ENCODE measurements at regions of chr2 and their contacts with region 1.

Region 1: DNA sequence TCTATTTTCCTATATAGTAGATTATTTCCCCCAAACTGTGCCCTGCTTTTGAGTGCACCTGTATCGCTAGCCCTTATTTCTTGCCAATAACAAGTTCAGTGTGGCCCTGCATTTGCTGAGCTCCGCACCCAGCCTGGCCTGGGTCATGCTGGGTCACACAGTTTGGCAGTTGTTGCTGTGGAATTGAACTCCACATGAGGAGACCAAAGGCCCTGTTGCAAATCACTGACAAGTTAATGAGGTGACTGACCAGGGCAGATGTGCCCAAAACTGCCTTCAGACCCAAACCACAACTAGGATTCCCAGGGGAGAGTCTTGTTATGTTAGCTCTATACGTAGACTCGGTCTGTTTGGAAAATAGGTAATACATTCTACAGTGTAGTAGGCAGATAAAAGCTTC is 31.0 kb downstream of the COL4A4 start:
- DNase-seq: no peak
- ATAC-seq: no peak
- H3K4me3 ChIP-seq: no peak overlapping the region
- H3K27ac ChIP-seq: no peak overlapping the region
- H3K4me1 ChIP-seq: no peaks in the 10 kb centered on the region
- H3K27me3 ChIP-seq: no peaks in the 10 kb centered on the region; the same call in 1 of the 2 replicates
- CTCF ChIP-seq: no peak

Region 2: GRCh38 chr2:226977775-226978190 is 155.2 kb before region 1 on chr2:
- CTCF ChIA-PET with region 1: no interaction called
- POLR2A ChIA-PET with region 1: no interaction called
- in situ Hi-C with region 1: no loop called
- intact Hi-C with region 1: no loop called
- DNase-seq: no peak
- ATAC-seq: no peak
- H3K4me3 ChIP-seq: no peak overlapping the region
- H3K27ac ChIP-seq: no peak overlapping the region
- H3K4me1 ChIP-seq: no peaks in the 10 kb centered on the region
- H3K27me3 ChIP-seq: no peaks in the 10 kb centered on the region
- CTCF ChIP-seq: no peak

Region 3: GRCh38 chr2:227238238-227239237 is 105.6 kb after region 1 on chr2:
- CTCF ChIA-PET with region 1: interaction called, 8 read pairs
- POLR2A ChIA-PET with region 1: no interaction called
- in situ Hi-C with region 1: no loop called
- intact Hi-C with region 1: loop called (anchors 1 kb)
- DNase-seq: peak; percentile 54
- ATAC-seq: peak; percentile 68; the same call in 1 of the 2 replicates
- H3K4me3 ChIP-seq: no peak overlapping the region
- H3K27ac ChIP-seq: no peak overlapping the region
- H3K4me1 ChIP-seq: no peaks in the 10 kb centered on the region
- H3K27me3 ChIP-seq: peaks cover 2% of the 10 kb centered on the region; the same call in 1 of the 2 replicates
- CTCF ChIP-seq: peak; percentile 93

Region 4: DNA sequence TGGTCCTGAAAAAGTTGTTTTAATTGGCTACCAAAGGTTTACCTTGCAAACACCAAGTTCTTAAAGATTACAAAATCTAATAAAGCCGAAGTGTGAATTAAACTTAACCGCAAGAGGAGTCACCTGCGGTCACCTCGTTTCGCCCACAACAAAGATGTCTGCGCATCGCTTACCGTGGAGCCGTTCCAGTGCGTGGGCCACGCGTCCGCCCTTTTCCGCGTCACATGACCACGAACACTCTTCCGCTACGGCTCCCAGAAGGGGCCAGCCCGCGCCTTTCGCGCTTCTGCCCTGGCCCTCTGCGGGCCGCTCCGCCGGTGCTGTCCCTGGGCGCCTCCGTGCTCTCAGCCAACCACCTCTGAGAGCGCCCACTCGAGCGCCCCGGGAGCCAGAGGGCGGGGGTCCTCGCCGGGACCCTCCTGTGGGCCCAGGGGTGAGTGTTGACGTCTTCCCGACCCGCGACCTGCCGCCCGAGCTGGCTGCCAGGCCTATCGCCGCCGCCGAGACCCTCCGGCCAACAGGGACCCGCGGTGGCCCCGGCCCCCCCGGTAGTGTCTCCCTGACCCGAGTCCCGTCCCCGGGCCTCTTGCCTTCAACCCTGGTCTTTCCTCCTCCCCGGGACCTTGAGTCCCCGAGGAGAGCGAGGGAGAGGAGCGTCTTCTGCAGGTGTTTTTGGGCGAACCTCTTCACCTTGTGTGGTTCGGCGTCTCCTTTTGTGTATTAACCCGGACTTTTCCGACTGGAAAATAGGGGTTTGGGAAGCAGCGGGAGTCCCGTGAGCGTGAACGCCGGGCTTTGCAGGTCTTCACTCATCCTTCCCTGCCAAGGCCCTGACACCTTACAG is 192.2 kb after region 1 on chr2 and contains the start of gene MFF:
- CTCF ChIA-PET with region 1: no interaction called
- POLR2A ChIA-PET with region 1: no interaction called
- in situ Hi-C with region 1: no loop called
- intact Hi-C with region 1: loop called (anchors 5 kb)
- DNase-seq: peak; percentile 61
- ATAC-seq: peak; percentile 98
- H3K4me3 ChIP-seq: peak within 1 kb of the TSS; percentile 77 to 97
- H3K27ac ChIP-seq: peak within 1 kb of the TSS; percentile 98
- H3K4me1 ChIP-seq: peaks cover 21% of the 10 kb centered on the region
- H3K27me3 ChIP-seq: no peaks in the 10 kb centered on the region
- CTCF ChIP-seq: peak; percentile 66
- total RNA-seq, gene MFF: 60.6 TPM

Region 5: GRCh38 chr2:227388537-227389011 is 255.6 kb after region 1 on chr2:
- CTCF ChIA-PET with region 1: no interaction called
- POLR2A ChIA-PET with region 1: no interaction called
- in situ Hi-C with region 1: no loop called
- intact Hi-C with region 1: loop called (anchors 10 kb)
- DNase-seq: peak; percentile 95
- ATAC-seq: no peak
- H3K4me3 ChIP-seq: no peak overlapping the region
- H3K27ac ChIP-seq: no peak overlapping the region
- H3K4me1 ChIP-seq: peaks cover 3% of the 10 kb centered on the region; the same call in 1 of the 2 replicates
- H3K27me3 ChIP-seq: peaks cover 2% of the 10 kb centered on the region; the same call in 1 of the 2 replicates
- CTCF ChIP-seq: no peak

Region 6: DNA sequence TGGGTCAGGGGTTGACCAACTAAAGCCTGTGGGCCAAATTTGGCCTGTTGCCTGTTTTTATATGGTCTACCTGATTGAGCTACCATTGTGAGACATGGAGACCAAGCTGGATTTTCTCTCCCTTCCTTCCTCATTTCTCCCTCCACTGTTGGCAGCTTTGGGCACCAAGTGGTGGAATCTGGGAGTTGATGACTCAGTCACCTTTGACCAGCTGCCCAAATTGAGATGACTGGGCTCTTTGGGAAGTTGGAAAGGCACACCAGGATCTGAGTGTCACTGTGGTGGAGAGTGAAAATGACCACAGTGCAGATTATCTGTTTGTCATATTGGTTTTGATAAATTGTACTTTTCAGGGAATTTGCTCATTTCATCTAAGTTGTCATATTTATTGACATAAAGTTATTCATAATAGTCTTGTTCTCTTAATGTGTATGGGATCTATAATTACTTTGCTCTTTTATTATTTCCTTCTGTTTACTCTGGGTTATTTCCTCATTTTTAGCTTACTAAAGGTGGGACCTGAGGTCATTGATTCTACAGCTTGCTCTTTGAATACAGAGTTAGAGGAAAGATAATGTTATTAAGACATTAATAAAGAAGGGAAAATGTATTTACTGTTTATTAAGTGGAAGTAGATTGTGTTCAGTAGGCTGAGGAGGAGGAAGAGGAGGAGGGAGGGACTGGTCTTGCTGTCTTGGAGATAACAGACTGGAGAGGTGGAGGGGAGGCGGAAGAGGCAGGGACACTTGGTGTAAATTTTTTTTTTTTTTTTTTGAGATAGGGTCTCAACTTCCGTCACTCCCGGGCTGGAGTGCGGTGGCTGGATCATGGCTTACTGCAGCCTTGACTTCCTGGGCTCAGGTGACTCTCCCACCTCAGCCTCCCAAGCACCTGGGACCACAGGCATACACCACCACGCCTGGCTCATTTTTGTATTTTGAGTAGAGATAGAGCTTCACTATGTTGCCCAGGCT is 370.7 kb after region 1 on chr2:
- CTCF ChIA-PET with region 1: no interaction called
- POLR2A ChIA-PET with region 1: no interaction called
- in situ Hi-C with region 1: no loop called
- intact Hi-C with region 1: no loop called
- DNase-seq: peak; percentile 39
- ATAC-seq: peak; percentile 90
- H3K4me3 ChIP-seq: no peak overlapping the region
- H3K27ac ChIP-seq: 0 out of 2 replicates have a peak overlapping the region, but pooled peaks have one; percentile 18
- H3K4me1 ChIP-seq: peaks cover 16% of the 10 kb centered on the region
- H3K27me3 ChIP-seq: no peaks in the 10 kb centered on the region
- CTCF ChIP-seq: no peak

Region 7: GRCh38 chr2:227766373-227766883 is 633.4 kb after region 1 on chr2:
- CTCF ChIA-PET with region 1: no interaction called
- POLR2A ChIA-PET with region 1: no interaction called
- in situ Hi-C with region 1: no loop called
- intact Hi-C with region 1: loop called (anchors 5 kb)
- DNase-seq: peak; percentile 53
- ATAC-seq: peak; percentile 99
- H3K4me3 ChIP-seq: no peak overlapping the region
- H3K27ac ChIP-seq: no peak overlapping the region
- H3K4me1 ChIP-seq: no peaks in the 10 kb centered on the region
- H3K27me3 ChIP-seq: no peaks in the 10 kb centered on the region
- CTCF ChIP-seq: peak; percentile 84